CD4-positive, alpha-beta T cell (primary cell): ENCODE measurements at regions of chr1 and their contacts with region 1.

Region 1: DNA sequence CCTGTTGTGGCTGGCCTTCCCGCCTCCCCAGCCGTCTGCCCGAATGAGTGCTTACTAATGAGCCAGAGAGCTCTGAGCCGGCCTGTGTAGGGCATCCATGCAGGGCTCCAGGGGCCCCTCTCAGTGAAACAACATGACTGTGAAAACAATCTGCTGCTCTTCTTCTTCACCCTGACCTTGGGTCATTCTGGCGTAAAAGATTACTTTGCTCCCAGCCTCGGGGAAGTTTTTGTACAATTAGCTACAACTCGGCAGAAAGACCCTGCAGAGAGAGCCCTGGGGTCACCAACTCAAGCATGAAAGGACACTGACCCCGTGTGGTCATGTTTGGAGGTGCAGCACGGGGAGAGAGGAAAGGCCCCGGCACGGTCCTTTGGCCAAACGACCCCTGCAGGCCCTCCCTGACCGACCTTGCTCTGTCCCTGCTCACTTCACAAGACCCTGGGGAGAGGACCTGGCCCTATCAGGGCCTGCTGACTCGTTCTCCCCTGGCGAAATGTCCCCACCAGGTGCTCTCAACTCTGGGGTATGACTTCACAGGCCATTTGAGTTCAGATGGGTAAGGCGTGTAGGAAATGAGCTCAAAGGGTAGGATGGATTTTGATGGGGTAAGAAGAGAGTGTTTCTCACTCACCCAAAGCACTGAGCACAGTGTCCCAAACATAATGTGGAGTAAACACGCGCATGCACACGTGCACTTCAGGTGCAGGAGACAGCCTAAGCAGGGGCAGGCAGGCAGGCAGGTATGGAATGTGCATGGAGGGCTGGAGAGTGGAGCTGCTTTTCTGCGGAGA is 22.9 kb upstream of the FAM20B start:
- DNase-seq: peak; percentile 39 to 75 (median 56)
- ATAC-seq: peak; percentile 74
- H3K4me3 ChIP-seq: no peak overlapping the region
- H3K4me3 Mint-ChIP-seq: no peak overlapping the region
- H3K27ac ChIP-seq: no peak overlapping the region
- H3K27ac Mint-ChIP-seq: no peak overlapping the region
- H3K4me1 ChIP-seq: peaks cover 22% of the 10 kb centered on the region
- H3K4me1 Mint-ChIP-seq: peaks cover 15% of the 10 kb centered on the region
- H3K27me3 ChIP-seq: no peaks in the 10 kb centered on the region
- H3K27me3 Mint-ChIP-seq: no peaks in the 10 kb centered on the region
- CTCF ChIP-seq: peak; percentile 92

Region 2: GRCh38 chr1:178310685-178311105 is 692.1 kb before region 1 on chr1:
- CTCF ChIA-PET with region 1: no interaction called
- POLR2A ChIA-PET with region 1: no interaction called
- intact Hi-C with region 1: loop called in 1 of 2 experiments (anchors 5 kb)
- DNase-seq: peak in 3 of 14 experiments; percentile 36 to 40 (median 40)
- ATAC-seq: no peak
- H3K4me3 ChIP-seq: no peak overlapping the region
- H3K4me3 Mint-ChIP-seq: no peak overlapping the region
- H3K27ac ChIP-seq: no peak overlapping the region
- H3K27ac Mint-ChIP-seq: no peak overlapping the region
- H3K4me1 ChIP-seq: no peaks in the 10 kb centered on the region
- H3K4me1 Mint-ChIP-seq: no peaks in the 10 kb centered on the region
- H3K27me3 ChIP-seq: no peaks in the 10 kb centered on the region
- H3K27me3 Mint-ChIP-seq: peaks cover 6% of the 10 kb centered on the region
- CTCF ChIP-seq: peak; percentile 57

Region 3: GRCh38 chr1:178532392-178532791 is 470.4 kb before region 1 on chr1:
- CTCF ChIA-PET with region 1: interaction called, 11 read pairs
- POLR2A ChIA-PET with region 1: interaction called, 3 read pairs
- intact Hi-C with region 1: loop called (anchors 1 to 2 kb)
- DNase-seq: peak; percentile 49 to 86 (median 68)
- ATAC-seq: peak; percentile 75
- H3K4me3 ChIP-seq: no peak overlapping the region
- H3K4me3 Mint-ChIP-seq: no peak overlapping the region
- H3K27ac ChIP-seq: no peak overlapping the region
- H3K27ac Mint-ChIP-seq: no peak overlapping the region
- H3K4me1 ChIP-seq: peaks cover 7% of the 10 kb centered on the region
- H3K4me1 Mint-ChIP-seq: peaks cover 5% of the 10 kb centered on the region
- H3K27me3 ChIP-seq: no peaks in the 10 kb centered on the region
- H3K27me3 Mint-ChIP-seq: peaks cover 5% of the 10 kb centered on the region
- CTCF ChIP-seq: peak; percentile 95

Region 4: GRCh38 chr1:178542560-178543356 is 460.0 kb before region 1 on chr1:
- CTCF ChIA-PET with region 1: no interaction called
- POLR2A ChIA-PET with region 1: no interaction called
- intact Hi-C with region 1: loop called in 1 of 2 experiments (anchors 2 kb)
- DNase-seq: peak; percentile 59 to 91 (median 84)
- ATAC-seq: peak; percentile 90
- H3K4me3 ChIP-seq: peak overlapping the region; percentile 77
- H3K4me3 Mint-ChIP-seq: peak overlapping the region; percentile 93
- H3K27ac ChIP-seq: no peak overlapping the region
- H3K27ac Mint-ChIP-seq: peak overlapping the region; percentile 39
- H3K4me1 ChIP-seq: peaks cover 16% of the 10 kb centered on the region
- H3K4me1 Mint-ChIP-seq: peaks cover 10% of the 10 kb centered on the region
- H3K27me3 ChIP-seq: no peaks in the 10 kb centered on the region
- H3K27me3 Mint-ChIP-seq: no peaks in the 10 kb centered on the region
- CTCF ChIP-seq: peak; percentile 99

Region 5: DNA sequence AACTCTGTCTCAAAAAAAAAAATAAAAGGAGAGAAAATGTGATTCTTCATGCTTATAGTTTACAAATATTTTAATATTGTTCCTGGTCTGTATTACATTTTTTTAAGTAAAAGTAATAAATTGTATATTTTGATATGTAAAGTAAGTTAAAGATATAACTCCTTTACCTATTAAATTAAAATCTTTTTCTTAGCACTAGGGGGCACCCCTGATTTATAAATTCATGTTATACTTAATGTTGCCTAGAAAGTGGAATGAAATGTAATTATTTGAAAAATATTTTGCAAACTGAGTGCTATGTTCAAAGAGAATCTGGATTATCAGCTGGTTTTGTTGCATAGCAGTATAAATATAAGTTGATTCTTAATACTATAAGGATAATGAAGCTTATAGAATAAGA is 228.5 kb before region 1 on chr1:
- CTCF ChIA-PET with region 1: no interaction called
- POLR2A ChIA-PET with region 1: no interaction called
- intact Hi-C with region 1: loop called (anchors 5 to 10 kb)
- DNase-seq: peak in 3 of 14 experiments; percentile 22 to 42 (median 26)
- ATAC-seq: no peak
- H3K4me3 ChIP-seq: no peak overlapping the region
- H3K4me3 Mint-ChIP-seq: no peak overlapping the region
- H3K27ac ChIP-seq: no peak overlapping the region
- H3K27ac Mint-ChIP-seq: no peak overlapping the region
- H3K4me1 ChIP-seq: no peaks in the 10 kb centered on the region
- H3K4me1 Mint-ChIP-seq: no peaks in the 10 kb centered on the region
- H3K27me3 ChIP-seq: no peaks in the 10 kb centered on the region
- H3K27me3 Mint-ChIP-seq: no peaks in the 10 kb centered on the region
- CTCF ChIP-seq: peak; percentile 54